Posterior cingulate gyrus (tissue), 11 donors: ENCODE measurements at regions of chr12 and their contacts with region 1.

Region 1: GRCh38 chr12:79935021-79935623 is at the start of gene PPP1R12A:
- DNase-seq: peak; percentile 92 to 99 (median 95)

Region 2: GRCh38 chr12:79834712-79835376 is 100.3 kb before region 1 on chr12:
- intact Hi-C with region 1: loop called (anchors 10 kb)
- DNase-seq: no peak

Region 3: GRCh38 chr12:80186727-80187217 is 251.7 kb after region 1 on chr12:
- intact Hi-C with region 1: loop called (anchors 10 kb)
- DNase-seq: peak in 2 of 10 donors; percentile 12 to 21